AG04450 (cell line): ENCODE measurements at regions of chr20 and their contacts with region 1.

Region 1: DNA sequence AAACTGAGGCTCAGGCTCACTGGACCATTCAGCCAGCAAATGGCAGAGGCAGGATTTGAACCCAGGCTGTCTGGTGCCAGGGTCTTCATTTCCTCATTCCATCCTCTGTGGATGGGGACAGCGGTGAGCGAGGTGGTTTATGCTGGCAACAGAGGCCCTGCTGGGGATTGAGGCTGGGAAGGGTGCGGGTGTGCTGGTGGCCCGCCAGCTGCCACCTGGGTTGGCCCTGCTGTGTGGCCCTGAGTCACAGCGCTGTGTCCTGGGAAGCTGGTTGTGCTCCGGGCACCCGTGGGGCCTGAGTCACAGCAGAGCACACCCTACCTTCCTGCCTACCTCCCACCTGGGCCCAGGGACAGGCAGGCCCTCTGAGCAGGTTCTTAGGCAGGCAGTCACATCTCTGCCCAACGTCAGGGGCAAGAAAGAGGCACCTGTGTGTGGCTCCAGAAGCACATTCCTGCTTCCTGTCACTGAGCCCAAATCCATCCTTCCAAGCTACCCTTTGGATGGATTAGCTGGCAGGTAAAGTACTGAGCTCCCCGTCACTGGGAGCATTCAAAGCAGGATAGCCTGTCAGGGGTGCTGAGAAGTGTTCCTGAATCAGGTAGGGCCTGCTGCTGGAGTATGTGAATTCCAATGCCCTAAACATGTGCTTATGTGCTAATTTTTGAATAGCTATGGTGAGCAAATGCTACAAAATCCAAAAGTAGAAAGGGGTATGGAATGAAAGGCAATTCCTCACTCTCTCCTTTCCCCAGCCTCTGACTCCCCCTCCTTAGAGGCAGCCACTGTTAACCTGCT is 53.9 kb downstream of the CEBPB start:
- DNase-seq: no peak
- H3K4me3 ChIP-seq: no peak overlapping the region
- H3K27ac ChIP-seq: no peak overlapping the region
- H3K27me3 ChIP-seq: no peaks in the 10 kb centered on the region
- CTCF ChIP-seq: no peak

Region 2: GRCh38 chr20:50233313-50233698 is 11.2 kb before region 1 on chr20:
- CTCF ChIA-PET with region 1: interaction called, 4 read pairs
- POLR2A ChIA-PET with region 1: interaction called, 14 read pairs
- DNase-seq: no peak
- H3K4me3 ChIP-seq: no peak overlapping the region
- H3K27ac ChIP-seq: no peak overlapping the region
- H3K27me3 ChIP-seq: no peaks in the 10 kb centered on the region
- CTCF ChIP-seq: no peak

Region 3: DNA sequence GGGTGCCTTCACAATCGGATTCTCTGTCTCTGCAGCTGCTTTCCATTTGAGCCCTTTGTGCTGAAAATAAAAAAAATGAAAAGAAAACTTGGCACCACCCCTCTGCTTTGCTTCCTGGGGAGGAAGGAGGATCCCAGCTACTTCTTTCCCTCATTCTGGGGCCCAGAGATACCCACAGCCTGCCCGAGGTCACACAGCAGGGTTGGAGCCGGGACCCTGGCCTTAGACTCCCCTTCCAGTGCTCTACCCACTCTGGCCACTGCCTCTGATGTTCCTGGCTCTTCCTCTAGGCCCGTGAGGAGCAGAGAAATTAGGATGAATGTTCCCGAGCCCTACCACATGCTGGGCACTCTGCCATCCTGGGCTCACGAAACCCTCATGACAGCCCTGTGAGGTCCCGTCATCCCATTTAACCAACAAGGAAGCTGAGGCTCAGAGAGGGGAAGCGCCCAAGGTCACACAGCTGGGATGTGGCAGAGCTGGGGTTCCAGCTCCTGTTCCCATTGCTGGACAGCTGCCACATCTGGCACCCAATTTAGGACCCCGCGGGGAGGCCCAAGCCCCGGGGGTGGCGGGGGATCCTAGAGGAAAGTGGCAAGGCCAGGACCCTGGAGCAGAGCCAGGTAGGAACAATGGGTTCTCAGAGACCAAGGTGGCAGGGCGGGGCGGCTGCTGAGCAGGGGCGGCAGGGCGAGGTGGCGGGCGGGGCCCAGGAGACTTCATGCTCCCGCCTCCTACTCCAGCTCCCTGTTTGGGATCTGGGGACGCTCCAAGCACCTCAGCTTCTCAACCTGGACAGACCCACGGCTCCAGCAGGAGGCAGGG is 22.7 kb after region 1 on chr20:
- CTCF ChIA-PET with region 1: no interaction called
- POLR2A ChIA-PET with region 1: no interaction called
- DNase-seq: no peak
- H3K4me3 ChIP-seq: no peak overlapping the region
- H3K27ac ChIP-seq: no peak overlapping the region
- H3K27me3 ChIP-seq: no peaks in the 10 kb centered on the region
- CTCF ChIP-seq: no peak